Mammary epithelial cell (primary cell): ENCODE measurements at regions of chr11 and their contacts with region 1.

Region 1: DNA sequence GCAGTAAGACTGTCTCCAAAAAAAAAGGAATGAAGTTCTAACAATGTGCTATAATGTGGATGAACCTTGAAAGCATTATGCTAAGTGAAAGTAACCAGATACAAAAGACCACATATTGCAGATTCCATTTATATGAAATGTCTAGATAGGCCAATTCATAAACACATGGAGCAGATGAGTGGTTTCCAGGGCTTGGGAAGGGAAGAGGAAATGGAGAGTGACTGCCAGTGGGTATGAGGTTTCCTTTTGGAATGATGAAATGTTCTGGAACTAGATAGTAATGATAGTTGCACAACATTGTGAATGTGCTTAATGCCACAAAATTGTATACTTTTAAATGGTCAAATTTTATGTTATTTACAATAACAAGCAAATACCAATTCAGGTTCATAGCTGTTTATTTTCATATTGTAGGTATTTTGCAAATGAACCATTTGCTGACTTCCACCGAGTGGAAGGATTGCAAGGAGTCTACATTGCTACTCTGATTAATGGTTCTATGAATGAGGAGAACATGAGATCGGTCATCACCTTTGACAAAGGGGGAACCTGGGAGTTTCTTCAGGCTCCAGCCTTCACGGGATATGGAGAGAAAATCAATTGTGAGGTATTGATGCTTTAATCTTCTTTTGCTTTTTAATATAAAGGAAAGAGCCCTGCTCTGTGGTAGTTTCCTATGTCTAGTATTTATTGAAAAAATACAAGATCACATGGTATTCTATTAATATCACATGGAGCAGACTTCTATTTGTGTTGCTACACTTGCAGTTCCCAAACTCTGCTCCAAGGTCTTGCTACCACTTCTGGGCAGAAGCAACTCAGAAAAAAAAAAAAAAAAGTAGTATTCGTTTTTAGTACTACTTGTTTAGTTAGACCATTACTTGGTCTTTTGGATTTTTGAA is 67.7 kb upstream of the SORL1-AS1 start:
- DNase-seq: peak; percentile 68
- H3K4me3 ChIP-seq: no peak overlapping the region
- H3K27ac ChIP-seq: peak overlapping the region; percentile 86
- H3K4me1 ChIP-seq: peaks cover 29% of the 10 kb centered on the region
- H3K27me3 ChIP-seq: no peaks in the 10 kb centered on the region
- CTCF ChIP-seq: no peak

Region 2: DNA sequence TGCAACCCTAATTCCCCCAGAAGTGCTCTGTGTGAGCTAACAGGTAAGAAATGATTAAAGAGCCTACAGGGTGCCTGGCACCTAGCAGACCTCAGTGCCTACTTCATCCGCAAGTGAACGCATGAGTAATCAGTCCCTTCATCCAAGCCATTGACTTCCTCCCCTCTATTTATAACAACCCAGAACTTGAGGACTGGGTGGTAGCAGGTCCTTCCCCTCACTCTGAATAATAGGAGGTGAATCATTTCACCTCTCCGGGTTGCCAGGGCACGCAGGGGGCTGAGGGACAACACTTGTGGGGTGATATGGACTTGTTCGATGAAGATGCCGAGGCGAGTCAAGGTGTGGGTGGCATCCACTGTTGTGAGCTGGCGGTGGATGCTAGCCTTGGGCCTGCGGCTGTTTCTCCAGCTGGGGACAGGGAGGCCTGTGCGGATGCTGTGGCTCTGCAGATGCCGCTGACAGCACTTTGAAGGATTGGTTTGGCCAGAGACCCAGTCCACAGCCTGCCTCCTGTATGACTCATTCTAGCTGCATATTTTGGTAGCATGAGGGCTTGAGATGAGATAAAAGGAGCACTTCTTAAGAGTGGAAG is 56.0 kb before region 1 on chr11:
- CTCF ChIA-PET with region 1: no interaction called
- dilution Hi-C with region 1: loop called (anchors 5 kb)
- in situ Hi-C with region 1: no loop called
- intact Hi-C with region 1: loop called (anchors 1 kb)
- DNase-seq: peak; percentile 92
- H3K4me3 ChIP-seq: no peak overlapping the region
- H3K27ac ChIP-seq: peak overlapping the region; percentile 87
- H3K4me1 ChIP-seq: peaks cover 50% of the 10 kb centered on the region
- H3K27me3 ChIP-seq: no peaks in the 10 kb centered on the region
- CTCF ChIP-seq: no peak

Region 3: DNA sequence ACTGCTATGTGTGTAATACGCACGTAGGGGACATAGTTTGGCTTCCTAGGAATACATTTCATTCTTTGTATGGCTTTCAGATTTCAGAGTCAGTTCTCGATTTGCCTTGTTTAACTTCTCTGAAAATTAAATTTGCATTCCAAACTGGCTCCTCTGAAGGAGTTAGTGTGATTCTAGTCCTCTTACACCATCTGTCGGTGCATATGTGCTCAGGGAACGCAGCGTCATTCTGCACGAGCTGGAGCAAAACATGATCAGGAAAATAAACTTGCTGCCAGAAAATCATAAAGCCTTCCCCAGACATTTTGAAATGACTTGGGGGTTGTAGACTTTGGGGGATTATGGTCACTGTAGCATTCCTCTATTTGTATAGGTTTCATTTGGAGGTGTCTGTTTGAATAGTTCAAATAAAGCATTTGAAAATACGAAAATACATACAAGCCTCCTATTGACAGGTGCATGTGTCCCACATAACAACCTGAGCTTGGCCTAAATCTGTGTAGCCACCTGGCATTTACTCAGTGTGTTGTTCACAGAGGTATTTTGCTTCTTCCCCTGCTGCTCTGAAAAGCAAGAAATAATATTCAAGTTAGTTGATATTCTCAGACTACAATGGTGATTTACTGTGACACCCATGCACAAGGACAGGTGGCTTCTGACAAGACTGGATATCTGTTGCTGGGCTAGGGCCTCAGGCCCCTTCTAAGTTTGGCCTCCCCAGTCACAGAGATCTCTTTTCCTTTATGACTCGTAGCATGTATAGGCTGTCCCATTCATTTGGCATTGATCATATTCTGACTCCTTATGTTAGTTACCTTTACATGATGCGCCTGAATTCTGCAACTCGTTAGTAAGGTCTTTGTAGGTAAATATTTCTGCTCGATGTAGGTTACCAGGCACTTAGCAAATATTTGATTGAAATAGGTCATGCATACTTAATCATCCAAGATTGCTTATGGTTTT is 13.9 kb after region 1 on chr11:
- CTCF ChIA-PET with region 1: no interaction called
- dilution Hi-C with region 1: no loop called
- in situ Hi-C with region 1: no loop called
- intact Hi-C with region 1: loop called (anchors 2 kb)
- DNase-seq: peak; percentile 6
- H3K4me3 ChIP-seq: no peak overlapping the region
- H3K27ac ChIP-seq: no peak overlapping the region
- H3K4me1 ChIP-seq: peaks cover 9% of the 10 kb centered on the region
- H3K27me3 ChIP-seq: no peaks in the 10 kb centered on the region
- CTCF ChIP-seq: no peak

Region 4: DNA sequence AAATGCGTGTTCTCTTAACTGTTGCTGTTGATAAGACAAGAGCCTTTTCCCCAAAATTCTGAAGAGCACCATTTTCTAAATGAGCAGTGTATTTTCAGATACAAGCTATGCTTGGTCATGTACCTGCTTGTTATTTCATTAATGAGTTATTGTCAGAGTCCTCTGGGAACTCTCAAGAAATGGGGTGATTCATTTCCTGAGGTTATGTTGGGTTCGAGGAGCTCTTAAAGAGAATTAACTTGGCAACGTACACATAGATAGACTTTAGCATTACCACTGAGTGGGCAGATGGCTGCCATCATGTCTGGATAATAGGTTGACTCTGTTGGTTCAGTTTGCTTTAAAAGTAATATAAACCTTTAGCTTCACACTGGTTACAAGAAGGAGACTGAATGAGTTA is 20.1 kb after region 1 on chr11:
- CTCF ChIA-PET with region 1: no interaction called
- dilution Hi-C with region 1: no loop called
- in situ Hi-C with region 1: no loop called
- intact Hi-C with region 1: loop called (anchors 1 kb)
- DNase-seq: peak; percentile 93
- H3K4me3 ChIP-seq: no peak overlapping the region
- H3K27ac ChIP-seq: peak overlapping the region; percentile 80
- H3K4me1 ChIP-seq: peaks cover 16% of the 10 kb centered on the region
- H3K27me3 ChIP-seq: no peaks in the 10 kb centered on the region
- CTCF ChIP-seq: no peak

Region 5: DNA sequence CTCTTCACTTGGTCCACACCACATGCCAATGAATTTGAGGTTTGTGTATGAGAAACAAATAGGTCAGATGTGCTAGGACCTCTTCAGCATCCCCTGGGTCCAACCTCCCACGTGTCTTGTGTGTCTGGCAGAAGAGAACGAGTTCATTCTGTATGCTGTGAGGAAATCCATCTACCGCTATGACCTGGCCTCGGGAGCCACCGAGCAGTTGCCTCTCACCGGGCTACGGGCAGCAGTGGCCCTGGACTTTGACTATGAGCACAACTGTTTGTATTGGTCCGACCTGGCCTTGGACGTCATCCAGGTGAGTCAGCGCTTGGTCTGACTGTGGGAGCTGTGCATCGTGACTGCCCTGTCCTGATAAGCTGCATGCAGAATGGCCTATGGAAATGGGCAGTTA is 33.3 kb after region 1 on chr11:
- CTCF ChIA-PET with region 1: no interaction called
- dilution Hi-C with region 1: no loop called
- in situ Hi-C with region 1: no loop called
- intact Hi-C with region 1: loop called (anchors 1 kb)
- DNase-seq: peak; percentile 63
- H3K4me3 ChIP-seq: no peak overlapping the region
- H3K27ac ChIP-seq: no peak overlapping the region
- H3K4me1 ChIP-seq: peaks cover 49% of the 10 kb centered on the region
- H3K27me3 ChIP-seq: no peaks in the 10 kb centered on the region
- CTCF ChIP-seq: no peak